PC-9 (cell line): ENCODE measurements at regions of chr19 and their contacts with region 1.

Region 1: DNA sequence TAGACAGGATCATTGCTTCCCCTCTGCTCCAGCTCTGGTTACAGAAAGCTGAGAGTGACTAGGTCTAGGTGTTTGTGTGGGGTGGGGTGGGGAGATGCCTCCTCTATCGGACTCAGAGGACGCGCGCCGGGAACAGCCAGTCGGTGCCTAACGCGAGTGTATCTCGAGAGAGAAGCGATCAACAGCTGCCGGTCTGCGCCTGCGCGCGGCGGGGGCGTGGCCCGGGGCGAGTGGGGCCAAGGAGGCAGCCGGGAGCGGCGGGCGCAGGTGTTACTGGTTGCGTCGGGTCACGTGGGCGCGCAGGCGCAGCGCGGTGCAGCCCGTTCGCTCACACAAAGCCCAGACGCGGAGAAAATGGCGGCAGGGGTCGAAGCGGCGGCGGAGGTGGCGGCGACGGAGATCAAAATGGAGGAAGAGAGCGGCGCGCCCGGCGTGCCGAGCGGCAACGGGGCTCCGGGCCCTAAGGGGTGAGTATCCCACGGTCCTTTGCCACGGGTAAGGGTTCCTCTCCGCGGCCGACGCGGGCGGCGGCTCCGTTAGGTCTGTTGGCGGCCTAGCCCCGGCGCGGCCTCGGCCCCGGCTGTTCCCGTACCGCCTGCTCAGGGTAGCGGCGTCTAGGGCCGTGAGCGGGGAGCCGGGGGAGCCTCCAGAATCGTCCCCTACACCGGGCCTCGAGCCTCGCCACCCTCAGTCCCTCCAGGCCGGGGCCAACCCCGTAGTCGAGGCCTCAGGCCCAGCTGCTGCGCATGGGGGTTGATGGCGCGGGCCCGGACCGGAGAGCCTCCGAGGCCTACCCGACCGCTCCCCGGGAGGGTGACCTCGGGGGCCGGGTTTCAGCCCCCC is at the start of gene HNRNPM:
- DNase-seq: peak; percentile 95 to 100
- H3K4me3 ChIP-seq: peak within 1 kb of the TSS; percentile 98
- H3K27ac ChIP-seq: peak within 1 kb of the TSS; percentile 76
- H3K4me1 ChIP-seq: peaks cover 38% of the 10 kb centered on the region
- H3K27me3 ChIP-seq: no peaks in the 10 kb centered on the region
- CTCF ChIP-seq: no peak
- total RNA-seq, gene HNRNPM: 220 and 239 TPM in 2 replicates

Region 2: DNA sequence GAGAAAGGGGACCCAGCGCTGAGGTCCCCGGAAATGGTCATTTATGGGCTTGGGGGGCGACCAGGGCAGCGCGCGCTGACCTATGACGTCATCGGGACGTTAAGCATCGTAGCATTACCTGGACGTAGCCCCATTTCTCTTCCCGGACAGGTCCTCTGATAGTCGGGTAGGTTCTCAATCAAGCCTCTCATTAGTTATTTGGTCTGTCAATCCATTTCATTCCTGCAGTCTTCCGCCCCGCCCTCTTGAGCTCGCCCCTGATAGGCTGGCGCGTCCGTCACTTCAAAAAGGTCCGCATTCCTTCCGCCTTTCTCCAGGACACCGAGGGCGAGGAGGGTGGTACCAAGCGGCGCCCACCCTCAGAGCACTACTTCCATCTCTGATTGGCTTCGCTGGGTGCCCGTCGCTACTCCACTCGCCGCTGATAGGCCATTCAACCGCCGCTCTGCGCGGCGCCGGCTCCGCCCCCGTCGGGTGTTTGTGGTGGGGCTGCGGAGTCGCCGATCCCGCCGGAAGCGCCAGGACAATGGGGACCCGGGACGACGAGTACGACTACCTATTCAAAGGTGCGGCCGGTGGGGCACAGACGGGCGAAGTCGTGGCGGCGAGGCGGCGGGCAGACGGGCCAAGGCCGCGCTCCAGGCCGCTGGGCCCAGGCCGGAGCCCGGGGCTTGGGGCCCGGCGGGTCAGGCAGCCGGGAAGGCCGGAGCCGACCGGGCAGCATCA is 54.8 kb before region 1 on chr19 and contains the start of gene RAB11B:
- CTCF ChIA-PET with region 1: no interaction called
- POLR2A ChIA-PET with region 1: interaction called, 4 read pairs
- intact Hi-C with region 1: loop called (anchors 1 kb)
- DNase-seq: peak; percentile 99 to 100
- H3K4me3 ChIP-seq: peak within 1 kb of the TSS; percentile 82
- H3K27ac ChIP-seq: peak within 1 kb of the TSS; percentile 85
- H3K4me1 ChIP-seq: peaks cover 56% of the 10 kb centered on the region
- H3K27me3 ChIP-seq: no peaks in the 10 kb centered on the region
- CTCF ChIP-seq: no peak
- total RNA-seq, gene RAB11B: 119 and 126 TPM in 2 replicates

Region 3: DNA sequence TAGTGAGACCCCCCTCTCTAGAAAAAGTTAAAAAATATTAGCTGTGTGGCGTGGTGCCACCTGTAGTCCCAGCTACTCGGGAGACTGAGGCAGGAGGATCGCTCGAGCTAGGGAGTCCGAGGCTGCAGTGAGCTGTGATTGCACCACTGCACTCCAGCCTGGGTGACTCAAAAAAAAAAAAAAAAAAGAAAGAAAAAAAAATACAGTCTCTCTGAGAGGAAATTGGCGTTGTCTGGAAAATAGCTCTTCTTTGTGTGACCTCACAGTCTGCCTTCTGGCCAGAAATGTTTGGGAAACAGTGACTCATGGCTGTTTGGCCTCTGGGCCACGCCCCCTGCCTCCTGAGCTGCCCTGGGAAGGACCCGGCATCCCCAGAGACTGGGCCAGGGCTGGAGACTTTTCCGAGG is 21.0 kb before region 1 on chr19:
- CTCF ChIA-PET with region 1: interaction called, 6 read pairs
- POLR2A ChIA-PET with region 1: interaction called, 11 read pairs
- intact Hi-C with region 1: no loop called
- DNase-seq: peak; percentile 91 to 98
- H3K4me3 ChIP-seq: peak overlapping the region; percentile 27; the same call in 1 of the 2 replicates
- H3K27ac ChIP-seq: peak overlapping the region; percentile 64
- H3K4me1 ChIP-seq: peaks cover 19% of the 10 kb centered on the region
- H3K27me3 ChIP-seq: no peaks in the 10 kb centered on the region
- CTCF ChIP-seq: no peak

Region 4: DNA sequence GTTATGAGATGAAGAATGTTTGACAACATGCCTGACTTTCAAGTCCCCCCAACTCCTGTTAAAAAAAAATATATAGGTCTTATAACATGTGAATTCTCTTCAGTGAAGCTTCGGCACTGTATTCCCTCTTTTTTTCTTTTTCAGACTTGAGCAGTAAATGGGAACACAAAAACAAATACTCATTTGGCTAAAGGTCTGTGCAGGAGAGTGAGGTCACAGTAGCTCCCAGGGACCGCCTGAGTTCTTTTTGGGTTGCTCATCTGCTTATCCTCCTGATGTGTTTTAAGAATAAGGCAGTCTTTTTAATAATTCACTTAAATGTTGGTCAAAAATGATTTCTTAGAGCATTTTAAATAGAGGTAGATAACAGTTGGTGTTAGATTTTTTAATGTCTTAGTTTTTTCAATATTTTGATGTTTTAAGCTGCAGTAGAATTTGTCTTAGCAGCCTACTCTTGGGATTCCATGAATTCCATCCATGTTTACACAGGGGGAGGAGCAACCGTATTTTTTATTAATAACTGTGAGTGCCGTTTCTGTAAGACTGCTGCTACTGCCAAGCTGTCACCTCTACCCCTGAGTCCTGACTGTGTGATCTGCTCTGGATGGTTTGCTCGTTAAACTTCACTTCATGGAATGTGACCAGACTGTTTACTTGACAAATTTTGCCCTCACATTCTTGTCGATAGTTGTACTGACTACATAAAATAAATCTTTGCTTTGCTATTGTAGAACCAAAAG is 14.8 kb after region 1 on chr19:
- CTCF ChIA-PET with region 1: interaction called, 3 read pairs
- POLR2A ChIA-PET with region 1: interaction called, 10 read pairs
- intact Hi-C with region 1: no loop called
- DNase-seq: peak; percentile 27 to 88
- H3K4me3 ChIP-seq: no peak overlapping the region
- H3K27ac ChIP-seq: peak overlapping the region; percentile 43
- H3K4me1 ChIP-seq: peaks cover 35% of the 10 kb centered on the region
- H3K27me3 ChIP-seq: no peaks in the 10 kb centered on the region
- CTCF ChIP-seq: no peak

Region 5: GRCh38 chr19:8615813-8616596 is 171.1 kb after region 1 on chr19:
- CTCF ChIA-PET with region 1: interaction called, 16 read pairs
- POLR2A ChIA-PET with region 1: no interaction called
- intact Hi-C with region 1: no loop called
- DNase-seq: peak in 1 of 2 experiments; percentile 48
- H3K4me3 ChIP-seq: no peak overlapping the region
- H3K27ac ChIP-seq: no peak overlapping the region
- H3K4me1 ChIP-seq: no peaks in the 10 kb centered on the region
- H3K27me3 ChIP-seq: peaks cover 16% of the 10 kb centered on the region; the same call in 1 of the 2 replicates
- CTCF ChIP-seq: peak; percentile 98